Psoas muscle (tissue), 8 donors: ENCODE measurements at regions of chr2 and their contacts with region 1.

Region 1: DNA sequence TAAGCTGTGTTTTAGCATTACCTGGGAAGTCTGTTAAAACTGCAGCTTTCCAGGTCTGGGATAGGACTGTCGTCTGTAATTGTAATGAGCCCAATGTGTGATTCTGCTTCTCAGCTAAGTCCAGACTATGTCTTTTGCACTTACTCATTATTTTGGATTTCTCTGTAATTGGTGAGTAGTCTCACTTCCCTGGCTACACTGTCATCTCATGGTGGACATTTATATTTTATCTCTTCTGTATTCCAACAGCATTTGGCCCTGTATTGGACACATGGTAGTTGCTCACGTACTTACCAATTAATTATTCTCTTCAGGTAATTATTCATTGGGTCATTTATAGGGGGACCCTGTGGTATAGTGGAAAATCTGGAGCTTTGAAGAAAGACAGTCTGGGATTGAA is 28.0 kb downstream of the LHCGR start:
- DNase-seq: no peak
- ATAC-seq: no peak
- H3K4me3 ChIP-seq: no peak overlapping the region
- H3K27ac ChIP-seq: no peak overlapping the region
- H3K4me1 ChIP-seq: no peaks in the 10 kb centered on the region
- H3K27me3 ChIP-seq: no peaks in the 10 kb centered on the region
- CTCF ChIP-seq: no peak

Region 2: DNA sequence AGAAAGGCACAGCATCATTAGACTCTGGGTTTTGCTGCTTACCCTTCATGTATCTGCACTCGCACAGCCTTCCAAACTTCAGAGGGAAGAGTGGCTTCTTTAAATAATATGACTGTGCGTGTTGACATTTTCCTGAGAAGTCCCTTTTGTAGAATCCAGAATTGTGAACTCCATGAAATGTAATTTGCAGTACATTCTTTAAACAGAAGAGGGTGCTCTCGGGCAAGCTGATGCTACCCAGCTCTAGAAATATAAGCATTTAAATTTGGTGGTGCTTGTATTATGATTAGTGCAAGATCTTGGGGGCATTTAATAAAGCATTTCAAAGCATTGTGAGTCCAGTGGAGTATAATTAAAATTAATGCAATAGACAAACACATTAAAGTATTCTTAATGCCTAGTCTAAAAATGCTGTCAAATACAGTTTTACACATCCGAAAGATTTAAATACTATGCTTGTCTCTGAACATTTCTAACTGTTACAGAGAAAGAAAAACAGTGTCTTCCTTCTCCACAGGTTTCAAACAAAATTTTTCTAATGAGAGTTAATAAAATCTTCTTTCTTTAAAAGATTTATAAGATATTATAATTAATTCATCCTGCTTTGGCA is 127.3 kb before region 1 on chr2:
- intact Hi-C with region 1: loop called in 1 of 2 experiments (anchors 5 kb)
- DNase-seq: no peak
- ATAC-seq: no peak
- H3K4me3 ChIP-seq: no peak overlapping the region
- H3K27ac ChIP-seq: no peak overlapping the region
- H3K4me1 ChIP-seq: no peaks in the 10 kb centered on the region
- H3K27me3 ChIP-seq: no peaks in the 10 kb centered on the region
- CTCF ChIP-seq: peak; percentile 52

Region 3: GRCh38 chr2:48715042-48715899 is 12.3 kb before region 1 on chr2:
- intact Hi-C with region 1: no loop called
- DNase-seq: peak in 1 of 2 donors; percentile 18
- ATAC-seq: no peak
- H3K4me3 ChIP-seq: no peak overlapping the region
- H3K27ac ChIP-seq: no peak overlapping the region
- H3K4me1 ChIP-seq: no peaks in the 10 kb centered on the region
- H3K27me3 ChIP-seq: no peaks in the 10 kb centered on the region
- CTCF ChIP-seq: no peak